Left cardiac atrium (tissue), 4 donors: ENCODE measurements at regions of chr2 and their contacts with region 1.

Region 1: GRCh38 chr2:157596992-157597681 is 31.5 kb downstream of the ACVR1C start:
- DNase-seq: peak; percentile 57
- ATAC-seq: peak; percentile 44 to 65

Region 2: DNA sequence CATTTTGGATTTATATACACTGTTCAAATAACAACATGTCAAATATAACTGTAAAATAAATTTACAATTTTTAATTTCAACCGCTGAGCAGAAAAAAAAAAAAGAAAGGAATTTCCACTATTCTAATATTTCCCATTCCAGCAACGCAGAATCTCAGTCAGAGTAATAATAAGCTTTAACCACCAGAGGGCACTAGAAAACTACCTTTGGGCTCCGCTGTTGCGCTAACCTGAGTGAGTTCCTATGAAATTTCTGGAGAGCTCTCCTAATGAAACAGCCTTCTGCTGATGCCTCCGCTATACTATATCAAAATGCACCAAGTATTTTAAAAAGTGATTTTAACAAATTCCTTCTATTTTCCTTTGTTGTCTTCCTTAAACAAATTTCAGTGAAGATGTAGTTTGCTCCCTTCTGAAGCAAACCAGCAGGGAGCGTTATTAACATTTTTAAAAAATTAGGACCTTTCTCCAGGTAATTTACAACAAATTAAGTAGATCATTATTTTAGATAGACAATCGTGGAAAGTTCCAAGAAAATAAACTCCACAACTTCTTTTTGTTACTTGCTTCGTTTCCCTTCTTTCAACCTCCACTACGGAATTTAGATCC is 294.5 kb before region 1 on chr2:
- intact Hi-C with region 1: loop called (anchors 2 to 10 kb)
- DNase-seq: no peak
- ATAC-seq: peak; percentile 55 to 67

Region 3: GRCh38 chr2:157497638-157498314 is 99.4 kb before region 1 on chr2:
- intact Hi-C with region 1: loop called in 1 of 2 experiments (anchors 5 kb)
- DNase-seq: no peak
- ATAC-seq: peak; percentile 56 to 84